ENCODE measurements at regions of chr13 and their contacts with region 1.

Region 1: DNA sequence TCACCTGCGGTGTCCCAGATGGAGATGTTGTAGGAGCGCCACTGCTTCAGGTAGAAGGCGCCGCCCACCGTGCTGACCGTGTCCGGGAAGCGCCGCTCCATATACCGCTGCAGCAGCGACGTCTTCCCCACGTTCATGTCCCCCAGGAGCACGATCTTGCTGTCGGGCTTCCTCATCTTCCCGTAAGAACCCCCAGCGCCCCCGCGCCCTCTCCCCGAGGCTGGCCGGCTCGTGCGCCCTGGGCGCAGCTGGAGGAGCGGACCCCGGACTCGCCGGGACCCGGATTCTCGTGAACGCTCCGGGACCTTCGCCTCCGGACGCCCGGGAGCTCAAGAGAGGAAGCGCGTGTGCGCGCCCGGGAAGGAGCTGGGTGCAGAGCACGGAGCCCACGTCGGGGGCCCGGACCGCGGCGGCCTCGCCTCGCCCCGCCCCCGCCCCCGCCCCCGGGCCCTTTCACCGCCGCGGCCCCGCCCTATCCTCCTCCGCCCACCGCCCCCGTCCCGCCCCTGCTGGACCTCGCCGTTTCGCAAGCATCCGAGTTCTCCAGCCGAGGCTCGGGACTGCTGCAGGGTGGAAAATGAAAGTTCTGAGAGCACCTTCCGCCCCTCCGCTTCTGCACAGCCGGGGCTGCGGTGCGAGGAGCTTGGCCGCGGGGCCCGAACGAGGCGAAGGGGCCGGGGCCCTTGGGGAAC is at the start of gene RAB20:
- DNase-seq: peak; percentile 94
- ATAC-seq: peak; percentile 87
- total RNA-seq, gene RAB20: 10.5 TPM

Region 2: DNA sequence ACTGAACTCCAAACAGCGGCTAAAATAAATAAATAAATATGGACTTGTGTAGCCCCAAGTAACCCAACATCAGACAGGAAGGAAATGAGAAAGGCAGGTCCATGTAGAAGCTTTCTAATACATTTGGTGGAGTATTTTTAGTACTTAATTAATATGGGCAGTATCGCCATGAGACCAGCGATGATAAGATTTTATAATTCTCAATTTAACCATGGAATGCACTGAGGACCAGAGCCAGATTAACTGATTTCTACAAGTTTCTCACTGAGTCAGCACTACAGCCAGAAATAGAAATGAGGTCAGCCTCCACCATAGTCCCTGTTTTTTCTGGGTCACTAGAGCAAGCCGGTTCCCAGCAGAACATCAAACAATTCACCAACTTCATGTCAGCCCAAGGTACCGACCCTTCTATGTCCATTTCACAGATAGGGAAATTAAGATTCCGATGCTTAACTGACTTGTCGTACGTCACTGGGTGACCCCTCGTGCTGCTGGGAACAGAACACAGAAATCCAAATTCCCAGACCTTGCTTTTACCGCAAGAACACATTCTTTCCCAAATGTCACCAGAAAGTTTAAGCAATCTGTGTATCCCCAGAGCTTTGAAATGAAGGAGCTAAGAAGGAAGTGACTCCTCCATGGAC is 345.0 kb before region 1 on chr13:
- intact Hi-C with region 1: loop called (anchors 10 kb)
- DNase-seq: no peak
- ATAC-seq: peak; percentile 66

Region 3: GRCh38 chr13:110455941-110456340 is 105.5 kb before region 1 on chr13:
- intact Hi-C with region 1: loop called (anchors 2 kb)
- DNase-seq: peak; percentile 86
- ATAC-seq: peak; percentile 82

Region 4: GRCh38 chr13:110509971-110510786 is 51.3 kb before region 1 on chr13:
- intact Hi-C with region 1: loop called (anchors 1 kb)
- DNase-seq: no peak
- ATAC-seq: peak; percentile 2

Region 5: DNA sequence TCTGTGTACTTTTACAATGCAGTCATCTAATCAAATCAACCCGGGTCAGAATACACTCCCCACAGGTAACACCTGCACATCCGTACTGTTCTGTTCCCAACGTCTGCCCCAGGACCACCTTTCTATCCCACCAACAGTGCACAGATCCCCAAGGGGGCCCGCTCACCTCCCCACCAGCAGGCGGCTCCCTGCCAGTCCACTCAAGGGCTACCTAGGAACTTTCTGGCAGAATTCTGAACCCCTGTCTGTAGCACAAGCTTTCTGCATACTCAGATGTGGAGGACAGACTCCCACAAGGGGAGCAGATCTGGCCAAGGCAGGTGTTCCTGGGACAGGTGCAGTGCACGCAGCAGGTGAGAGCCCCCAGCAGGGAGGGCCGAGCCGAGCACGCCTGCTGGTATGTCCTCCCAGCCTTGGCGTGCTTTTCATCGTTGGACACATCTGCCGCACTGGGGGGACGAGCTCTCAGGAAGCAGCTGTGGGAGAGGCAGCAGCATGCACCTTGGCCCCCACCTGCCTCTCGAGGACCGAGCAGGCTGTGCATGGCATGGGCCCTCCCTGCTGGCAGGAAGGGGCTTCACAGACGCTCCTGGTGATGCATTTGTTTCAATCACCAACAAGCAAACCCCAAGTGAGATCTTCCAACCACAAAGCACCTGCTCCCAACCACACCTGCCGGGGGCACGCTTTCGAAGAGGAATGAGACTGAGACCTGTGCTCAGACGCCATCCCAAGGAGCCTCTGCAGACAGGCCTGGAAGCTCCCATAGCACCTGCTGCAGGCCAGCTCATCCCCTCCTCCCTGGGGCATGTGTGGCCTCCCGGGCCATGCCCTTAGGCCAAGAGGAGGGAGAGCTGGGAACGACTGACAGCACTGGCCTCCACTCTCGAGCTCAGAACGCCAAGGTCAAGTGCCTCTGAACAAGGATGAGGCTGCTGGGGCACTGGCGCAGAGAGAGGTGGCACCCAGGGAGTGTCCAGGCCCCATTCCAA is 35.9 kb before region 1 on chr13:
- intact Hi-C with region 1: loop called (anchors 2 kb)
- DNase-seq: no peak
- ATAC-seq: peak; percentile 69

Region 6: DNA sequence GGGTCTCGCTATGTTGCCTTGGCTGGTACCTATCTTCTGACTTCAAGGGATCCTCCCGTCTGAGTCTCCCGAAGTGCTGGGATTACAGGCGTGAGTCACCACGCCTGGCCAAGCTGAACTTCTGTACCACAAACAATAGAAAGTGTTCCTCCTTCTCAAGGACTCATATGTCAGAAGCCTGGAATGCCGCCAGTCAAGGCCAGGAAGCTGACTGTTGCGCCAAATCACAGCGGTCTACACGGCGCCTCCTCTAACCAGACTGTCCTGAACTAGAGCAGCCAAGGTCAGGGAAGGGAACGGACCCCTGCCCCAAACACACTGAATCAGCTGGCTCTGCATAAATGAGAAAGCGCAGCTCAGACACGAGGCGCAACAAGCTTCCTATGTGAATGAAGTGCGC is 14.6 kb before region 1 on chr13:
- intact Hi-C with region 1: loop called (anchors 2 kb)
- DNase-seq: peak; percentile 88
- ATAC-seq: peak; percentile 70

Region 7: DNA sequence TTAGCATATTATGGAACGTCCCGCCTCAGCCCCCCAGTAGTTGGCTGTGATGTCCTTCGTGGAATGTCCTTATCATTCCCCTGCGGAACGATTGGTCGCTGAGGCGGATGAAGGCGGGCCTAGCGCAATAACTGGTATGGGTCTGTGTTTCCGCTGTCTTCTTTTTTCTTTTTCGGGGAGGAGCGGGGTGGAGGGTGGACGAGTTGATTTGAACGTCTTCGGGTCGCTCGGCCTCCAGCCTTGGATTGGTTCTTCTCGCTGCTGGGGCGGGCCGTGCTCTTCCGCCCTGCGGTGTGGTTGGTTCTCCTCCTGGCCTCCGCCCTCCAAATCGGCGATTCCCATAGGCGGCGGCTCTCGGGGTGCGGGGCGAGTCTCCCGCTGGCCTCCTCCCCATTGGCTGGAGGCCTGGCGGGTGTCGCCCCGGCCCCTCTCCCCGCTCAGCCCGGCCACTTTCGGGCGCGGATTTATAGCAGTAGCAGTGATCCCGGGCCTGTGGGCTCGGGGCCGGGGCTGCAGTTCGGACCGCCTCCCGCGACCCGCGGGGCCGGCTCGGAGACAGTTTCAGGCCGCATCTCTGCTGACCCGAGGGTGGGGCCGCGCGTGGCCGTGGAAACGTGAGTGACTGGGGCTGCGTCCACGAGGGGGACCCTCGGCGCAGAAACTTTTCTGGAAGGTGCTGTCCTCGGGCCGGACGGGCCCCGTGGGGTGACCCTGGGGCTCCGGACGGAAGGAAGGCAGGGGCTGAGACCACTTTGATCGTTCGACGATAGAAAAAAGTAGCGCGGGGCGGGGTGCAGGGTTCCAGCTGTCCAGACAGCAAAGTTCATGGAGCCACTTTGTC is 154.1 kb after region 1 on chr13:
- intact Hi-C with region 1: no loop called
- DNase-seq: peak; percentile 99
- ATAC-seq: peak; percentile 78